Caco-2 (cell line): ENCODE measurements at regions of chr2 and their contacts with region 1.

Region 1: DNA sequence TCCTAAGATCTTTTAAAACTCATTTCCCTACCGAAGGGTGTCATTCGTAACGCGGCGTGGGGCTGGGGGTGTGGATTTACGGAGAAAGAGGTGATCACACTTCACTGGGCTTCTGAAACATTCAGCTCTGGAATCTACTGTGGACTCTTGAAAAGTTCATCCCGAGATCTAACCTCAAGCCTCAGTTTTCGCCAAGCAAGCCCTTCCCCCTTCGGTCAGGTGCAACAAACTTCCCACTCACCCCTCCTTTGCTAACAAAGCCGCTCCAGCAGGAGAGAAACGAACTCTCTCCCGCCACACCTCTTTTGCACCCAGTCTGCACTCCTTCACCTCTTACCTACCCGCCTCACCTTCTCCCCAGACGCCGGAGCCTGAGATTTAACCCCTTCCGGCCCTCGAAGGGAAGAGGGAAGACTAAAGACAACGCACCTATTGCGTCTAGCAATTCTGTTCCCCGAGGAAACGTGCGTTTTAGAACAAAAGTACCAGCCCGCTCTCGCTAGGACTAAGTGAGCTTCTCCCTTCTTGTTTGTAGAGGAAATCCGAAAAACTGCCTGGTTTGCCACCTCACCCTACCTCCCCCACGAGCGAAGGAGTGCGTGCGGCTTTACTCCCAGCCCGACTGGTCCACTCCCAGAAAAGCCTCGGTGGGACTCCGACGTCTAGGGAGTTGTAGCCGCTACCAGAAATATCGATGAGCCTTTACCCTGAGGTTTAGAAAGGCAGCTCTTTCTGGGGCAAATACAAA is 538 bp upstream of the PEX13 start:
- DNase-seq: peak; percentile 87 to 94
- H3K4me3 ChIP-seq: peak overlapping the region; percentile 67
- H3K4me3 Mint-ChIP-seq: peak overlapping the region; percentile 88
- H3K27ac Mint-ChIP-seq: peak overlapping the region; percentile 97
- H3K4me1 ChIP-seq: peaks cover 8% of the 10 kb centered on the region
- H3K4me1 Mint-ChIP-seq: no peaks in the 10 kb centered on the region
- H3K27me3 ChIP-seq: no peaks in the 10 kb centered on the region
- H3K27me3 Mint-ChIP-seq: no peaks in the 10 kb centered on the region
- CTCF ChIP-seq: no peak

Region 2: GRCh38 chr2:61044636-61045035 is 27.7 kb after region 1 on chr2:
- CTCF ChIA-PET with region 1: no interaction called
- POLR2A ChIA-PET with region 1: no interaction called
- intact Hi-C with region 1: loop called (anchors 1 kb)
- DNase-seq: no peak
- H3K4me3 ChIP-seq: no peak overlapping the region
- H3K4me3 Mint-ChIP-seq: no peak overlapping the region
- H3K27ac Mint-ChIP-seq: no peak overlapping the region
- H3K4me1 ChIP-seq: no peaks in the 10 kb centered on the region
- H3K4me1 Mint-ChIP-seq: peaks cover 6% of the 10 kb centered on the region
- H3K27me3 ChIP-seq: no peaks in the 10 kb centered on the region
- H3K27me3 Mint-ChIP-seq: no peaks in the 10 kb centered on the region
- CTCF ChIP-seq: no peak

Region 3: GRCh38 chr2:61065715-61066709 is 49.0 kb after region 1 on chr2 and contains the start of gene SANBR:
- CTCF ChIA-PET with region 1: no interaction called
- POLR2A ChIA-PET with region 1: no interaction called
- intact Hi-C with region 1: loop called (anchors 5 kb)
- DNase-seq: peak; percentile 88 to 95
- H3K4me3 ChIP-seq: peak within 1 kb of the TSS; percentile 99
- H3K4me3 Mint-ChIP-seq: peak within 1 kb of the TSS; percentile 98
- H3K27ac Mint-ChIP-seq: peak within 1 kb of the TSS; percentile 91
- H3K4me1 ChIP-seq: peaks cover 3% of the 10 kb centered on the region; the same call in 1 of the 2 replicates
- H3K4me1 Mint-ChIP-seq: peaks cover 7% of the 10 kb centered on the region
- H3K27me3 ChIP-seq: no peaks in the 10 kb centered on the region
- H3K27me3 Mint-ChIP-seq: no peaks in the 10 kb centered on the region
- CTCF ChIP-seq: peak in 1 of 2 experiments; percentile 10
- total RNA-seq, gene SANBR: 13.3 and 14.3 TPM in 2 replicates